ENCODE measurements at regions of chr1 and their contacts with region 1.

Region 1: GRCh38 chr1:2314803-2315673 is 76.3 kb downstream of the MORN1 start:
- DNase-seq: no peak
- H3K4me3 ChIP-seq: peak overlapping the region; percentile 53 to 78
- H3K27ac ChIP-seq: peak overlapping the region; percentile 90 to 93
- H3K4me1 ChIP-seq: peaks cover 21 to 100% (median 89%) of the 10 kb centered on the region in 4 donors
- H3K27me3 ChIP-seq: no peaks in the 10 kb centered on the region
- CTCF ChIP-seq: peak; percentile 71 to 99

Region 2: DNA sequence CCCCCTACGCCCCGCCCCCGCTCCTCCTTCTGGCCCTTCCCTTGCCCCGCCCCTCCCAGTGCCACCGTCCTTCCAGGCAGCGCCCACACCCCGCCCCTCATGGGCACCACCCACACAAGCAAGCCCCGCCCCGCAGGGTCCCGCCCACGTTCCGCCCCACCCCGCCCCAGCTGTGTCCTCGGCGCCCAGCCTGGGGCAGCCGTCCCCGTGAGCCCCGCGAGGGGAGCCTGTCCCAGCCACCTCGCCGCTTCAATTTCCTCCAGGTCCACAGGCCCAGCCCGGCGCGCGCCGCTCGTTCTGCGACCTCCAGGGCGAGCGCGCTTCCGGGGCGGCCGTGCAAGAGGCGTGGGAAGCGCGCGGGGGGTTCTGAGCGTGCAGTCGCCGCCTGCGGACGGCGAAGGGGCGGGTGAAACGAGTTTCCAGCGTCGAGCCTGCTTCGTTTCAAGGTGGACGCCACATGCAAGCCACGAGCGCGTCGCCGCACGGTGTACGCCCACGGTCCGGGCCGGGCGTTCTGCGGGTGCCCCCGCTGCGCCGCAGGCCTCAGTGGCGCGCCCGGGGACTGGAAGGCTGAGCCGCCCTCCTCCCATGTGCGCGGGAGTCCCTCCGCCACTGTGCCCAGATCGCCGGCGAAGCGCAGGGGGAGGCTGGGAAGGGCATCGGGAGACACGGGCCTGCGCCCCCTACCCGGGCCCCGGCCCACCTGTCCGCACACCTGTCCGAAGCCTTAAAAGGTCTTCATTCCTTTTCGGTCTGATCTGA is 109.7 kb before region 1 on chr1:
- intact Hi-C with region 1: loop called (anchors 10 kb)
- DNase-seq: peak; percentile 97 to 98
- H3K4me3 ChIP-seq: peak overlapping the region; percentile 51 to 60
- H3K27ac ChIP-seq: peak overlapping the region; percentile 95 to 97
- H3K4me1 ChIP-seq: peaks cover 19 to 73% (median 66%) of the 10 kb centered on the region in 4 donors
- H3K27me3 ChIP-seq: no peaks in the 10 kb centered on the region
- CTCF ChIP-seq: peak in 1 of 2 experiments; percentile 34

Region 3: GRCh38 chr1:2233997-2234761 is 80.9 kb before region 1 on chr1:
- intact Hi-C with region 1: loop called (anchors 5 kb)
- DNase-seq: peak; percentile 97 to 98
- H3K4me3 ChIP-seq: peak overlapping the region; percentile 84 to 88
- H3K27ac ChIP-seq: peak overlapping the region; percentile 90 to 94
- H3K4me1 ChIP-seq: peaks cover 11 to 83% (median 69%) of the 10 kb centered on the region in 4 donors
- H3K27me3 ChIP-seq: no peaks in the 10 kb centered on the region
- CTCF ChIP-seq: no peak

Region 4: DNA sequence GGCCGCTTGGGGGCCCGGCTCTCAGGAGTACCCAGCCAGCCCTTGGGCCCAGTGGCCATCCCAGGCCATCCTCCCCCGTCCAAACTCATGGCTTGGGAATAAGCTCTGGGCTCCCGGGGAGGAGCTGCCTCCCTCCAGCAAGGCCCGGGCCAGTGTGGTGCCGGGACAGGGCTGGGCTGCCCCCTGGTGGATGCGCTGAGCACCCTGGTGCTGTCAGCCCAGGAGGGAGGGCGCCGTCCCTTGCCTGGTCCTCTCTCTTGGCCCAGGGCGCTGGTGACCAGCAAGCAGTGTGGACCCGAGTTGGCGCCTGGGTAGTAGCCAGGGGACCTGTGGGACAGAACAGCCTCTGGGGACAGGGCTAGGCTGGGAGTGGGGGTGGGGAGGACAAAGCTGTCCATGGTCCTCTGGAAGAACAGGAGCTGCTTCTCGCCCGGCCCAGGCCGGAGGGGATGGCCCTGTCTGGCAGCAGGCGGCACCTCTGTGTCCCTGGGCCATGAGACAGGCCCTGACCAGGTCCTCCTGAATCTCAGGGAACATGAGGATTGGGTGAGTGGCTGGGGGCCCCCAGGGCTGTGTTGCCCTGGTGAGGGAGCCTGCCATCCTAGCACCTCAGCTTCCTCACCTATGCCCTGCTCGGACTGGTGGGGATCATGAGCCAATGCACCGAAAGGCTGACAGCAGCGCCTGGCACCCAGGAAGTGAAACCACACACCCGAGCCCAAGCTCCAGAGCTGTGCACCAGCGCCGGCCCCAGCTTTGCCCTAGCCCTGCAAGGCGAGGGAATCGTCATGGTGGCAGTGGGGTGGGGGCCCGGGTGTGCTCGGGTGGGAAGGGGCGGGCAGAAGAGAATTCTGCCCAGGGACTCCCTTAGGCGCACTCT is 66.9 kb after region 1 on chr1:
- intact Hi-C with region 1: loop called (anchors 10 kb)
- DNase-seq: peak; percentile 82 to 91
- H3K4me3 ChIP-seq: no peak overlapping the region
- H3K27ac ChIP-seq: peak overlapping the region; percentile 48
- H3K4me1 ChIP-seq: peaks cover 0 to 16% (median 12%) of the 10 kb centered on the region in 4 donors
- H3K27me3 ChIP-seq: no peaks in the 10 kb centered on the region
- CTCF ChIP-seq: peak; percentile 97 to 99